ENCODE measurements at regions of chr12 and their contacts with region 1.

Region 1: GRCh38 chr12:4477129-4477528 is 31.5 kb upstream of the FGF6 start:
- DNase-seq: no peak
- H3K4me3 ChIP-seq: no peak overlapping the region
- H3K27ac ChIP-seq: no peak overlapping the region
- H3K4me1 ChIP-seq: no peaks in the 10 kb centered on the region
- H3K27me3 ChIP-seq: peaks cover 53% of the 10 kb centered on the region
- CTCF ChIP-seq: no peak

Region 2: GRCh38 chr12:5633106-5633505 is 1156.0 kb after region 1 on chr12:
- CTCF ChIA-PET with region 1: no interaction called
- POLR2A ChIA-PET with region 1: interaction called, 11 read pairs
- intact Hi-C with region 1: no loop called
- DNase-seq: no peak
- H3K4me3 ChIP-seq: no peak overlapping the region
- H3K27ac ChIP-seq: no peak overlapping the region
- H3K4me1 ChIP-seq: no peaks in the 10 kb centered on the region
- H3K27me3 ChIP-seq: peaks cover 86% of the 10 kb centered on the region
- CTCF ChIP-seq: no peak

Measured in PC-9 (cell line).